A549 (cell line): ENCODE measurements at regions of chr11 and their contacts with region 1.

Region 1: GRCh38 chr11:67541198-67541597 is 18.0 kb upstream of the CABP2 start:
- DNase-seq: no peak
- ATAC-seq: peak; percentile 41 to 44; a peak in 2 of 6 replicates
- H3K4me3 ChIP-seq: no peak overlapping the region
- H3K27ac ChIP-seq: no peak overlapping the region
- H3K4me1 ChIP-seq: peaks cover 12% of the 10 kb centered on the region
- CTCF ChIP-seq: no peak
- EP300 ChIP-seq: no peak
- POLR2A ChIP-seq: no peak
- RAD21 ChIP-seq: no peak

Region 2: GRCh38 chr11:67563354-67564114 is 22.3 kb after region 1 on chr11:
- CTCF ChIA-PET with region 1: interaction called, 14 read pairs
- POLR2A ChIA-PET with region 1: no interaction called
- DNase-seq: peak in 1 of 2 experiments; percentile 94
- ATAC-seq: peak; percentile 80 to 82
- H3K4me3 ChIP-seq: no peak overlapping the region
- H3K27ac ChIP-seq: peak overlapping the region; percentile 77 to 90
- H3K4me1 ChIP-seq: peaks cover 32% of the 10 kb centered on the region
- CTCF ChIP-seq: no peak
- EP300 ChIP-seq: 0 out of 5 replicates have a peak, but pooled peaks of 1 of the 2 experiments have one; percentile 24
- POLR2A ChIP-seq: no peak
- RAD21 ChIP-seq: no peak